Activated T-helper 1 cell treated with anti-CD3 and anti-CD28 coated beads, Interleukin-12 subunit alpha, Interleukin-12 subunit beta, Interleukin-2, Interleukin-4 antibody, amounts not matched to agents 30 ng/mL and 10 ng/mL and 1 ng/mL, durations not matched to agents 14 hours and 24 hours and 36 hours (primary cell): ENCODE measurements at regions of chr15 and their contacts with region 1.

Region 1: GRCh38 chr15:68550481-68551295 is 28.1 kb upstream of the CORO2B start:
- DNase-seq: peak; percentile 50
- H3K4me3 Mint-ChIP-seq: no peak overlapping the region
- H3K27ac Mint-ChIP-seq: no peak overlapping the region
- H3K4me1 Mint-ChIP-seq: peaks cover 11% of the 10 kb centered on the region
- H3K27me3 Mint-ChIP-seq: peaks cover 29% of the 10 kb centered on the region

Region 2: GRCh38 chr15:68674975-68675374 is 124.3 kb after region 1 on chr15:
- intact Hi-C with region 1: loop called (anchors 1 kb)
- DNase-seq: no peak
- H3K4me3 Mint-ChIP-seq: no peak overlapping the region
- H3K27ac Mint-ChIP-seq: no peak overlapping the region
- H3K4me1 Mint-ChIP-seq: no peaks in the 10 kb centered on the region
- H3K27me3 Mint-ChIP-seq: peaks cover 9% of the 10 kb centered on the region

Region 3: DNA sequence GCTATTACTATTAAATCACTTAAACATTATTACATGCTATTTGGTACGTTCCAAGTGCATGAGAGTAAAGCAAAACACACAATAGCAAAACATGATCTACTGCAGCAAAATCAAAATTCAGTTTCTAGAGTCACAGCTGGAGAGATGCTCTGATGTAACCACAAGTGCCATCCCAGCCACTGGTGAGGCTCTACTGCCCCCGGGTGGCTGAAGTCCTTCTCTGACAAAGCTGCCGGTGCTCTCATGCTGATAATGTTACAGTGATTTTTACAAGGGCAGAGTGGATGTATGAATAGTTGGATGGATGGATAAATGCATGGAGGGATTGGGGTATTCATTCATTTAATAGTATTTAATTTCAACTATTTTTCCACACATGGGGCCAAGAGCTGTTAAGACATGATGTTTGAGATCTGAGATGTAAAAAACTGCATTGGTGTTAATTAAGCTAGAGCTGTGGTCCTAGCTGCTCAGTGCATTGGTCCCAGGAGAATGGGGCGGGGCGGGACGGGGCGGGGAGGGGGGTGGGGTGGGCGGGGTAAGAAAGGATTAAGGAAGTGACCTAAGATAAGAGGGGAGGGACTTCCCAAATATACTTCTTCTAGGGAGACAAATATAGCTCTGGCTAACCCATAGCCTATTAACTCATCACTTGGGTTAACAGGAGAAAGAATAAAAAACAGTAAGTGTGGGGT is 374.3 kb after region 1 on chr15:
- intact Hi-C with region 1: loop called (anchors 2 kb)
- DNase-seq: peak; percentile 33
- H3K4me3 Mint-ChIP-seq: no peak overlapping the region
- H3K27ac Mint-ChIP-seq: no peak overlapping the region
- H3K4me1 Mint-ChIP-seq: no peaks in the 10 kb centered on the region
- H3K27me3 Mint-ChIP-seq: peaks cover 12% of the 10 kb centered on the region